B cell (primary cell): ENCODE measurements at regions of chr1 and their contacts with region 1.

Region 1: GRCh38 chr1:27656157-27656893 is 15.7 kb downstream of the IFI6 start:
- DNase-seq: peak; percentile 34
- ATAC-seq: no peak
- H3K4me3 ChIP-seq: no peak overlapping the region
- H3K4me3 Mint-ChIP-seq: peak overlapping the region; percentile 8
- H3K27ac ChIP-seq: no peak overlapping the region
- H3K27ac Mint-ChIP-seq: peak overlapping the region; percentile 58
- H3K4me1 ChIP-seq: peaks cover 26 to 47% of the 10 kb centered on the region in 2 donors
- H3K4me1 Mint-ChIP-seq: peaks cover 42% of the 10 kb centered on the region
- H3K27me3 ChIP-seq: no peaks in the 10 kb centered on the region
- H3K27me3 Mint-ChIP-seq: no peaks in the 10 kb centered on the region
- CTCF ChIP-seq: no peak

Region 2: DNA sequence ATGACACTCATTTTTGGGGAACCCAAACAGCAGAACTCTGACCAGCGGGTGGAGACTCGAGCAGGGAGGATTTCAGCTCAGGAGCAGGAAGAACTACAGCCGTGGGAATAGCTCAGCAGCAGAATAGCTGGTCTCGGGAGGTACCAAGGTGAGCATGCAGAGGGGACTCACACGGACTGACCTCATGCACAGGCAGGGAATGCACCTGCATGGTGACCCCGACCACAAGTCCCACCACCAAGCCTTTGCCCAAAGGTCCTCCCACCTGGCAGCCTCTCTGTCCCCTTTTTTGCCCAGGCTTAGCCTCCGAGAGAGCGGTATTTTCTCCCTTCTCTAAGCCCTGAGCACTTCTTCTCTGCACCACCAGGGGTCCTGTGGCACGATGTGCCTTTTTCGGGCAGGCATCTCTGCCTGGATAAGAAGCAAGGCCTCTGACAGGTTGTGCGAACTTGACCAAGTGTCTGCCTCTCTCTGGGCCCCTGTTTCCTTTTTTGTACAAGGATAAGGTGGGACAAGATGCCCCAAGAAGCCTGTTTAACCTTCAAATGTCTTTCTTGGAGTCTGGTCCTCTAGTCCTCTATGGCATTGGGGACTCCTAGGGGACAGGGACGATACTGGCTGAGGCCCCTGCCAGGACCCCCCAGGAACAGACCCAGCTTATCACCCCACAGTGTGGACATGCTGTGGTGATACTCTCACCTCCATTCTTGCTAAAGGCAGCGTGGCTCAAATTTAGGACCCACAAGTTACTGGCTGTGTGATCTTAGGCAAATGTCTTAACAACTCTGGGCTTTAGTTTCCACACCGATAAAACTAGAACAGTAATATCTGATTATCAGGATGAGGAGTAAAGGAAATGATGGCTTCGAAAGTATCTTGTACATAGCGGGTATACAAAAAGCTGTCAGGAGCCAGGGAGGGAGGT is 12.4 kb before region 1 on chr1:
- CTCF ChIA-PET with region 1: interaction called, 101 read pairs
- POLR2A ChIA-PET with region 1: interaction called, 9 read pairs
- intact Hi-C with region 1: loop called (anchors 1 kb)
- DNase-seq: peak; percentile 82
- ATAC-seq: peak; percentile 98
- H3K4me3 ChIP-seq: no peak overlapping the region
- H3K4me3 Mint-ChIP-seq: no peak overlapping the region
- H3K27ac ChIP-seq: no peak overlapping the region
- H3K27ac Mint-ChIP-seq: peak overlapping the region; percentile 74
- H3K4me1 ChIP-seq: peaks cover 10 to 17% of the 10 kb centered on the region in 2 donors
- H3K4me1 Mint-ChIP-seq: peaks cover 16% of the 10 kb centered on the region
- H3K27me3 ChIP-seq: no peaks in the 10 kb centered on the region
- H3K27me3 Mint-ChIP-seq: no peaks in the 10 kb centered on the region
- CTCF ChIP-seq: peak; percentile 85

Region 3: GRCh38 chr1:27736252-27736651 is 79.9 kb after region 1 on chr1:
- CTCF ChIA-PET with region 1: no interaction called
- POLR2A ChIA-PET with region 1: no interaction called
- intact Hi-C with region 1: no loop called
- DNase-seq: no peak
- ATAC-seq: no peak
- H3K4me3 ChIP-seq: no peak overlapping the region
- H3K4me3 Mint-ChIP-seq: no peak overlapping the region
- H3K27ac ChIP-seq: no peak overlapping the region
- H3K27ac Mint-ChIP-seq: no peak overlapping the region
- H3K4me1 ChIP-seq: no peaks in the 10 kb centered on the region
- H3K4me1 Mint-ChIP-seq: no peaks in the 10 kb centered on the region
- H3K27me3 ChIP-seq: no peaks in the 10 kb centered on the region
- H3K27me3 Mint-ChIP-seq: no peaks in the 10 kb centered on the region
- CTCF ChIP-seq: no peak